ENCODE measurements at regions of chr5 and their contacts with region 1.

Region 1: GRCh38 chr5:180328296-180329137 is 24.6 kb downstream of the GFPT2 start:
- H3K4me3 ChIP-seq: no peak overlapping the region
- H3K27ac ChIP-seq: no peak overlapping the region
- H3K4me1 ChIP-seq: no peaks in the 10 kb centered on the region
- CTCF ChIP-seq: peak; percentile 74

Region 2: GRCh38 chr5:180291943-180292831 is 36.3 kb before region 1 on chr5 and contains the start of gene MAPK9:
- CTCF ChIA-PET with region 1: interaction called, 39 read pairs
- POLR2A ChIA-PET with region 1: no interaction called
- H3K4me3 ChIP-seq: peak within 1 kb of the TSS; percentile 90
- H3K27ac ChIP-seq: peak within 1 kb of the TSS; percentile 89
- H3K4me1 ChIP-seq: 0 out of 2 replicates have a peak, but pooled peaks cover 3% of the 10 kb centered on the region
- CTCF ChIP-seq: no peak

Region 3: GRCh38 chr5:180315762-180316212 is 12.7 kb before region 1 on chr5:
- CTCF ChIA-PET with region 1: interaction called, 23 read pairs
- POLR2A ChIA-PET with region 1: interaction called, 3 read pairs
- H3K4me3 ChIP-seq: no peak overlapping the region
- H3K27ac ChIP-seq: no peak overlapping the region
- H3K4me1 ChIP-seq: no peaks in the 10 kb centered on the region
- CTCF ChIP-seq: peak; percentile 55; the same call in 1 of the 2 replicates

Region 4: GRCh38 chr5:180343831-180344327 is 15.4 kb after region 1 on chr5:
- CTCF ChIA-PET with region 1: interaction called, 17 read pairs
- POLR2A ChIA-PET with region 1: no interaction called
- H3K4me3 ChIP-seq: no peak overlapping the region
- H3K27ac ChIP-seq: no peak overlapping the region
- H3K4me1 ChIP-seq: no peaks in the 10 kb centered on the region
- CTCF ChIP-seq: no peak

Measured in HEK293 (cell line).